ENCODE measurements at regions of chr3 and their contacts with region 1.

Region 1: GRCh38 chr3:107740992-107741896 is 218.5 kb downstream of the BBX start:
- DNase-seq: no peak
- ATAC-seq: peak; percentile 52

Region 2: GRCh38 chr3:107392549-107393165 is 348.6 kb before region 1 on chr3:
- intact Hi-C with region 1: no loop called
- DNase-seq: no peak
- ATAC-seq: no peak

Region 3: DNA sequence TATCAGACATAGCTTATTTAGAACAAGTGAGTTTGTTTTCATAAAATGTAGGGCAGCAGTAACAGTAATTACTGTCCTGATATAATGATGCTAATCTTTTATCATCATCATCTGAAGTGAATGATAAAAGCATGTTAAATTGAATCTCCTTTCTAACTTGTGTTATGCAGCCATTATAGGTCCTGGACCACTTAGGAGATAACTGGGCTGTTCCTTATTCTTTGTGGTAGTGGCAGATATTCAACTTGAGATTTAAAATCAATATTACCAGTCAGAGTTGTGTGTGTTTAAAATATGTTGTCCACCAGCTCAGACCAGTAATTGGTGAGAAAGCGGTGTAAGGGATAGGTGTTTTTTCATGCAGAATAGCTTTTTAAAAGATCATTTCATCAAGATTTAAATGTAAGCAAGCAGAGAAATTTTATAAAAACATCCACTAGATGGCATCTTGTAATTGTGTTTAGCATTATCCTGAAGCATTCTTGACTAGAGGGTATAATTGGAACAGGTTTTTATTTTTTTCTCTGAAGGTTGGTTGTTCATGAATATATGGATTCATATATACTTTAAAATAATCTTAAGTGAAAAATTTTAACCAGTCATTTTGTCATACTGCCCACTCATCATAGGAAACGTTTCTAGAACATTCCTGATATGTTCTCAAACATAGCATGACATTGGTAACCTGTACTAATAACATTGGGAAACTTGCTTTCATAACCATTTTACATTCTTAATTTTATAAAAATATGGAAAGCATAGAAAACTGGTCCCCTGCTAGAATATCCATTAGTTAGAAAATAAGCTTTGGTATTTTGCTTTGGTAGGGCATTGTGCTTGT is 64.6 kb before region 1 on chr3:
- intact Hi-C with region 1: loop called (anchors 10 kb)
- DNase-seq: no peak
- ATAC-seq: peak; percentile 52

Region 4: GRCh38 chr3:108234387-108234957 is 493.2 kb after region 1 on chr3:
- intact Hi-C with region 1: no loop called
- DNase-seq: no peak
- ATAC-seq: no peak

Region 5: DNA sequence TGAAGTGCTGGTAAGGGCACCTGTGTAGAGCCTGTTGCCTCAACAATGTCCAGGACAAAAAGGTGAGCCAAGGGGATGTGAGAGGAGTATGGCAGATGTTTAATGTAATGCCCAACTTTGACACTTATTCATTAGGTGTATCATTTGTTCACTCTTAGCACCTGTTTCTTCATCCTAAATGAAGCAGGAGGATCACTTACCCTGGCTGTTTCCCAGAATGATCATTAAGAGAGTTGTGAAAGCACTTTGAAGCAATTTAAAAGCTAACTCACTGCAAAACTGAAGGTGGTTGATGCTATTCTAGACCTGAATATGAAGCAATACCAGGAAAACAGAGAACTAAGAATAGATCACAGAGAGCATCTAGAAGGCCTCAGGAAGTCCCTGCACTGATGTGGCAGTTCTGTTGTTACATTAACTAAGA is 551.7 kb after region 1 on chr3:
- intact Hi-C with region 1: no loop called
- DNase-seq: no peak
- ATAC-seq: no peak